CD14-positive monocyte (primary cell): ENCODE measurements at regions of chr11 and their contacts with region 1.

Region 1: DNA sequence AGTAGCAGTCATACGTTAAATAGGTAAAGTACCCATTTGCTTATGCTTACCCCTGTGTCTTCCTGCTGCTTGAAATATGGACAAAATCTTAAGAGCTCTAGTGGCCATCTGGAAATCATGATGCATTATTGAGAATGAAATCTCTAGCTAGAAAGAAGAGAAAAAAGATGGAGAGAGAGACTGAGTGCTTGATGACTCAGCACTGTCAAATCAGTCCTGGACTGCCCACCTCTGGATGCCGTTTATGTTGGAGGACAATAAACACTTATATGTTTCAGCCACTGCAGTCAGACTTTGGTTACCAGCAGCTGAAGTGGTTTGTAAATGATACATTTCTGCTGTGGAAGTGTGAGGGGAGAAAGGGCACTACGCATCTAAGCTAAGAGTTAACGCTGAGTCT is 3.6 kb downstream of the OR8B4 start:
- DNase-seq: no peak
- H3K4me3 ChIP-seq: no peak overlapping the region
- H3K4me3 Mint-ChIP-seq: no peak overlapping the region
- H3K27ac ChIP-seq: no peak overlapping the region
- H3K27ac Mint-ChIP-seq: no peak overlapping the region
- H3K4me1 ChIP-seq: no peaks in the 10 kb centered on the region
- H3K4me1 Mint-ChIP-seq: no peaks in the 10 kb centered on the region
- H3K27me3 ChIP-seq: peaks cover 0 to 2% of the 10 kb centered on the region in 2 donors
- H3K27me3 Mint-ChIP-seq: peaks cover 0 to 8% (median 4%) of the 10 kb centered on the region in 3 donors
- CTCF ChIP-seq: no peak

Region 2: GRCh38 chr11:124586238-124586860 is 165.3 kb after region 1 on chr11:
- intact Hi-C with region 1: loop called (anchors 5 to 10 kb)
- DNase-seq: peak; percentile 23 to 51 (median 41)
- H3K4me3 ChIP-seq: no peak overlapping the region
- H3K4me3 Mint-ChIP-seq: no peak overlapping the region
- H3K27ac ChIP-seq: no peak overlapping the region
- H3K27ac Mint-ChIP-seq: no peak overlapping the region
- H3K4me1 ChIP-seq: no peaks in the 10 kb centered on the region
- H3K4me1 Mint-ChIP-seq: no peaks in the 10 kb centered on the region
- H3K27me3 ChIP-seq: no peaks in the 10 kb centered on the region
- H3K27me3 Mint-ChIP-seq: peaks cover 7 to 9% (median 9%) of the 10 kb centered on the region in 3 donors
- CTCF ChIP-seq: peak; percentile 63

Region 3: GRCh38 chr11:124763156-124763947 is 342.3 kb after region 1 on chr11:
- intact Hi-C with region 1: no loop called
- DNase-seq: peak; percentile 26 to 49 (median 32)
- H3K4me3 ChIP-seq: peak overlapping the region; percentile 38 to 80 (median 42)
- H3K4me3 Mint-ChIP-seq: peak overlapping the region; percentile 90 to 99
- H3K27ac ChIP-seq: no peak overlapping the region
- H3K27ac Mint-ChIP-seq: peak overlapping the region in 2 of 7 donors; percentile 40 to 85
- H3K4me1 ChIP-seq: peaks cover 43 to 50% of the 10 kb centered on the region in 2 donors
- H3K4me1 Mint-ChIP-seq: peaks cover 40% of the 10 kb centered on the region
- H3K27me3 ChIP-seq: peaks cover 29 to 45% of the 10 kb centered on the region in 2 donors
- H3K27me3 Mint-ChIP-seq: peaks cover 39 to 49% (median 45%) of the 10 kb centered on the region in 3 donors
- CTCF ChIP-seq: peak; percentile 94